ENCODE measurements at regions of chr1 and their contacts with region 1.

Region 1: GRCh38 chr1:93021539-93022134 is 57.4 kb upstream of the MTF2 start:
- DNase-seq: peak; percentile 33
- ATAC-seq: no peak
- H3K4me3 ChIP-seq: no peak overlapping the region
- H3K27ac ChIP-seq: no peak overlapping the region
- H3K4me1 ChIP-seq: no peaks in the 10 kb centered on the region
- H3K27me3 ChIP-seq: no peaks in the 10 kb centered on the region
- CTCF ChIP-seq: peak; percentile 69; the same call in 1 of the 2 replicates

Region 2: DNA sequence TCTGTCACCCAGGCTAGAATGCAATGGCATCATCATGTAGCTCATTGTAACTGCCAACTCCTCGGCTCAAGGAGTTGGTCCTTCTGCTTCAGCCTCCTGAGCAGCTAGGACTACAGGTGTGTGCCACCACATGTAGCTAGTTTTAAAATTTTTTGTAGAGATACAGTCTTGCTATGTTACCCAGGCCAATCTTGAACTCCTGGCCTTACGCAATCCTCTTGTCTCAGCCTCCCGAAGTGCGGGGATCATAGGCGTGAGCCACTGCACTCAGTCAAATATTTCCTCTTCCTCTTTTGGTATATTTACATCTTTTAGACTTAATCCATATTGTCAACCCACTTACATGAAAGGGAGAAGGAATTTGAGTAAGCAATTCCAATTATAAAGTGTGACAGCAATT is 357.9 kb before region 1 on chr1:
- CTCF ChIA-PET with region 1: no interaction called
- POLR2A ChIA-PET with region 1: no interaction called
- in situ Hi-C with region 1: no loop called
- intact Hi-C with region 1: no loop called
- DNase-seq: no peak
- ATAC-seq: no peak
- H3K4me3 ChIP-seq: no peak overlapping the region
- H3K27ac ChIP-seq: no peak overlapping the region
- H3K4me1 ChIP-seq: no peaks in the 10 kb centered on the region
- H3K27me3 ChIP-seq: no peaks in the 10 kb centered on the region
- CTCF ChIP-seq: no peak

Region 3: DNA sequence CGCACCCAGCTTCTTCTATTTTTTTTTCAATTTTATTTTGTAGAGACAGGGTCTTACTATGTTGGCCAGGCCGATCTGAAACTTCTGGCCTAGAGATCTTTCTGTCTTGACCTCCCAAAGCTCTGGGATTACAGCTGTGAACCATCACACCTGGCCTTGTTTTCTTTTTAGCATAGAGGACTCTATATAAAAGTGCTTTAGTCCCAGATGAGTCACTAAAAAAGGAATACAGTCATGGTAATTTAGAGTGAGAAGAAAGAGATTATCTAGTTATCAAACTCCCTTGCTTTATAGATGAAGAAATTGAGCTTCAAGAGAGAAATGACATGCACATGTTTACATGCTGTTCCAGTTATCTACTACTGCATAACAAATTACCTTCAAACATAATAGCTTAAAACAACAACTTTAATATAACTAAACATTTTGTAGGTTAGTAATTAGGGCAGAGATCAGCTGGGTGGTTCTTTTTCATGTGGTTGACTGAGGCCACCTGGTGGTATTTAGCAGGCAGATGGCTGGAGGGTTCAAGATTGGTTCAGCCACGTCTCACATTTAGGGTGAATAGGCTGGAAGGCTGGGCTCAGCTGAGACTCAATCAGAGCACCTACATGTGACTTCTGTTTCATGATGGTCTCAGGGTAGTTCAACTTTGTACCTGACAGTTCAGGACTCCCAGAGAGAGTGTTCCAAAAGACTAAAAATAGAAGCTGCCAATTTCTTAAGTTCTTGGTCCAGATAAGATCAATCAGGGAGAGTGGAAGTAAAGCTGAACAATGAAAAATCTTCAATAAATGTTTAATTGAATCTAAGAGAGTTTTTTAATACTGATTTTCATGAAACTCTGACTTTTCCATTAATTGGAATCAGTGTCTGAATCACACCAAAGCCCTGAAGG is 40.5 kb after region 1 on chr1:
- CTCF ChIA-PET with region 1: interaction called, 4 read pairs
- POLR2A ChIA-PET with region 1: no interaction called
- in situ Hi-C with region 1: no loop called
- intact Hi-C with region 1: loop called (anchors 1 kb)
- DNase-seq: no peak
- ATAC-seq: peak; percentile 70; the same call in 1 of the 2 replicates
- H3K4me3 ChIP-seq: no peak overlapping the region
- H3K27ac ChIP-seq: no peak overlapping the region
- H3K4me1 ChIP-seq: no peaks in the 10 kb centered on the region
- H3K27me3 ChIP-seq: no peaks in the 10 kb centered on the region; the same call in 1 of the 2 replicates
- CTCF ChIP-seq: peak; percentile 71

Measured in Panc1 (cell line).